ENCODE measurements at regions of chr4 and their contacts with region 1.

Region 1: DNA sequence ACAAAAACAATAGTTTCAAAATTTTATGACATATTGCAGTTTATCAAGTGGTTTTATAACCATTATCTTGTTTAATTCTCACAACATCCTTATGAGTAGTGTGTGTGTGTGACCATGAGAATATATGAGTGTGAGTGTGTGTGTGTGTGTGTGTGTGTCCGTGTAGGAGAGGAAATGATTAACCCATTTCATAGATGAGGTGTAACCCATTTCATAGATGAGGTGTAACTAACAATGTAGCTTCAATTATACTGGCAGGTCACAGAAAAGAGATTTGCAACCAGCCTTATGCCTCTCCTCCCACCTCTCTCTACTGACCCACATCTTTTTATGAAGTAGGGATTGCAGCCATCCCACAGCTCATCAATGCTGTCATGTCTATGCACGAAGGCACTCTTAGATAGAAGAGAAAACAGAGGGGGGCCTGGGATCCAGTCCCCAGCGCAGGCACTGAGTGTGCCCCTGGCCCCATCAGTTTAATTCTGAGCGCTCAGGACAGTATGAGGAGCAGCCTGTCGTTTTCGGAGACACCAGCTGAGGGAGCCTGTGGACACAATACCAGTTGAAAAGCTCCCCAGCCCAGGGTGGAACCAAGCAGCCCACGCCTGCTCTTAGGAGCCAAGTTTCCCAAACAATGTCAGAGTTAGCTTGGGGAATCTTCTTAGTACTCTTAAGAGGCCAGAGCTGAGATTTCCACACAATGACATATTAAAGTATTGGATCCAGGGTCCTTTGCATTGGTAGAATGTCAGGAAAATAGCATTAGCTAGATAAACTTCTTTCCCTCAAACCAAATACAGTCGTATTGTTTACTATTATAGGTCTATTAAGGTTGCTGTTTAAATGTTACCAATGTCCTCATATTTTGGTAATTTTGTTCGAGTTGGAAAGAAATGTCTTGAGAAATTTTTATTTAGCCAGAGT is 88.6 kb downstream of the PALLD start:
- DNase-seq: peak in 1 of 2 donors; percentile 93
- H3K4me3 ChIP-seq: no peak overlapping the region
- H3K27ac ChIP-seq: peak overlapping the region; percentile 8
- H3K4me1 ChIP-seq: peaks cover 30% of the 10 kb centered on the region
- H3K27me3 ChIP-seq: no peaks in the 10 kb centered on the region
- CTCF ChIP-seq: peak in 2 of 3 experiments; percentile 56 to 75
- POLR2A ChIP-seq: no peak

Region 2: GRCh38 chr4:167897116-167897515 is 688.3 kb before region 1 on chr4:
- intact Hi-C with region 1: no loop called
- DNase-seq: no peak
- H3K4me3 ChIP-seq: no peak overlapping the region
- H3K27ac ChIP-seq: no peak overlapping the region
- H3K4me1 ChIP-seq: peaks cover 5% of the 10 kb centered on the region
- H3K27me3 ChIP-seq: no peaks in the 10 kb centered on the region
- CTCF ChIP-seq: no peak
- POLR2A ChIP-seq: no peak

Region 3: DNA sequence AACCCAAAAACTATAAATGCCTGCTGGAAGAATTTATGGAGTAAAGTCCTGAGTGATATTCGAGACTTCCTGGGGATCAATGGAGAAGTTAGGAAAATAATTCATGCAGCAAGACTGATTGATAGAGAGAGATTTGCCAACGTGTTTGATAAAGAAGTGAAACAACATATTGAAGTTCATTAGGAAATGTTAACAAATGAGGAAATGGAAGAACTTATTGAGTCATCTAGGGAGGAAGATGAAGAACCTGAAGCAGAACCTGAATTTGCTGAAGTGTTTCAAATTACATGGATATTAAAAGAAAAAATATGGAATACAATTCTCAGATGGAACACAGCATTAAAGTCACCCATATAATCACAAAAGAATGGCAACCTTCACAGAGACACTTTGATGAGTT is 305.9 kb before region 1 on chr4:
- intact Hi-C with region 1: no loop called
- DNase-seq: no peak
- H3K4me3 ChIP-seq: no peak overlapping the region
- H3K27ac ChIP-seq: no peak overlapping the region
- H3K4me1 ChIP-seq: no peaks in the 10 kb centered on the region
- H3K27me3 ChIP-seq: no peaks in the 10 kb centered on the region
- CTCF ChIP-seq: no peak
- POLR2A ChIP-seq: no peak

Region 4: DNA sequence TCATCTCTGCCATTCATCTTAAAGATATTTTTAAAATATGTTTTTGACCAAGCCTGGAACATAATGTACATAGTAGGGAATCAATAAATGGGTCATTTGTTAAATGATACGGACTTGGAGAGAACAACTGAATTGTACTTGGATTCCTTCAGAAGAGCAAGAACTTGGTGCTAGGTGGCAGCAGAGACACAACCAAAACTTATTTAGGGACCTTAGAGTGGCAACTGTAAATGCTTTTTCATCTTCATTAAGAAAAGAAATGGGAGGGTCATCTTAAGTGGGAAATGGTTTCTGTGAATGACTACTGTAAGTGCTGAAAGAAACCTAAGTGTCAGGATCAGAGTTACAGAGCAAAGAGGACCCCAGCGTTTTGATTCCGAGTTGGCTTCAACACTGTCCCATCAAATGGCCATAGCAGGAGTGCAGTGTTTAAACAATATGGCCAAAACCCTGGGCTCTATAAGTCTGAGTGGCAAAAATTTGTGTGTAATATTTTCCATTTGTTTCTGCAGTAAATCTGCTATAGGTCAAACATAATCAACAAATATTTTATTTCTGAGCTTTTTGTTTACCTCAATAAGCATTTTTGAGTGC is 125.0 kb after region 1 on chr4:
- intact Hi-C with region 1: loop called (anchors 5 kb)
- DNase-seq: no peak
- H3K4me3 ChIP-seq: no peak overlapping the region
- H3K27ac ChIP-seq: no peak overlapping the region
- H3K4me1 ChIP-seq: peaks cover 17% of the 10 kb centered on the region
- H3K27me3 ChIP-seq: no peaks in the 10 kb centered on the region
- CTCF ChIP-seq: peak; percentile 28 to 58 (median 51)
- POLR2A ChIP-seq: no peak

Measured in vagina (tissue), 2 donors.